B cell (primary cell): ENCODE measurements at regions of chr15 and their contacts with region 1.

Region 1: DNA sequence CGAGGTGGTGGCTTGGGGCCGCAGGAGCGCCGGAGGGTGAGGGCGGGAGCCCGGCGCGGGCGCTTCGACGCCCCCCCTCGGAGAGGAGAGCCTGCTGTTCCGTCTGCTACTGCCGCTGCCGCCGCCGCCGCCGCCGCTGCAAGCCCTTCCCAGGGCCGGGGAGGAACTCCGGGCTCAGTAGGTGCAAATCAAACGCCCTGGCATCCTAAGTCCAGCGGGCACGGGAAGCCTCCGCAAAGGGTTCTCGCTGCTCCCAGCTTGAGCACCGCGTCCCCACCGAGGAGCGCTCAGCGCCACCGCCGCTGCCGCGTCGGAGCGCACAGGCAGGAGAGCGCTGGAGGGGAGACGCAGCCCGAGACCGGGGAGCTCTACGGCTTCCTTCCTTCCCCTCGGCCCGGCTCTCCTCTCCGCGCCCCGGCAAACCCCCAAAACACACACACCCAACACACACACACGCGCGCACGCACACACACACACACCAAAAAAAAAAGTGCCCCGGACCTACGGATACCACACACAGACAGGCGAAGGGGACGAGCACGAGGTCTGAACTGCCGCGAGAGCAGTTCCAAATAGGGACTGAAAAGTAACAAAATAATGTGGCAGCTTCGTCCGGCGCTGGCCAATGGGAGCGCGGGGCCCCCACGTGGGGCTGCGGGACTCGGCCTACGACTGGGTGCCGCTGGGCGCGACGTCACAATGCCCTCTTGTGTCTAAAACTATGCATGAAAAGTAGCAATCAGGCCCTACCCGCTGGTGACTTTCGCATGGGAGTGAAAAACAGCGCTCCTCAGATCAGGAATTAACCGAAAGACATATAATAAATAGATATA is at the start of gene TLE3:
- DNase-seq: peak; percentile 99
- ATAC-seq: peak; percentile 53
- H3K4me3 ChIP-seq: peak within 1 kb of the TSS; percentile 82 to 97 (median 92)
- H3K4me3 Mint-ChIP-seq: peak within 1 kb of the TSS; percentile 98
- H3K27ac ChIP-seq: peak within 1 kb of the TSS; percentile 79 to 87
- H3K27ac Mint-ChIP-seq: peak within 1 kb of the TSS; percentile 97
- H3K4me1 ChIP-seq: peaks cover 57 to 68% of the 10 kb centered on the region in 2 donors
- H3K4me1 Mint-ChIP-seq: peaks cover 65% of the 10 kb centered on the region
- H3K27me3 ChIP-seq: peaks cover 0 to 20% (median 10%) of the 10 kb centered on the region in 4 experiments
- H3K27me3 Mint-ChIP-seq: peaks cover under 1% of the 10 kb centered on the region
- CTCF ChIP-seq: peak; percentile 56
- total RNA-seq, gene TLE3: 261 and 278 TPM in 2 replicates

Region 2: DNA sequence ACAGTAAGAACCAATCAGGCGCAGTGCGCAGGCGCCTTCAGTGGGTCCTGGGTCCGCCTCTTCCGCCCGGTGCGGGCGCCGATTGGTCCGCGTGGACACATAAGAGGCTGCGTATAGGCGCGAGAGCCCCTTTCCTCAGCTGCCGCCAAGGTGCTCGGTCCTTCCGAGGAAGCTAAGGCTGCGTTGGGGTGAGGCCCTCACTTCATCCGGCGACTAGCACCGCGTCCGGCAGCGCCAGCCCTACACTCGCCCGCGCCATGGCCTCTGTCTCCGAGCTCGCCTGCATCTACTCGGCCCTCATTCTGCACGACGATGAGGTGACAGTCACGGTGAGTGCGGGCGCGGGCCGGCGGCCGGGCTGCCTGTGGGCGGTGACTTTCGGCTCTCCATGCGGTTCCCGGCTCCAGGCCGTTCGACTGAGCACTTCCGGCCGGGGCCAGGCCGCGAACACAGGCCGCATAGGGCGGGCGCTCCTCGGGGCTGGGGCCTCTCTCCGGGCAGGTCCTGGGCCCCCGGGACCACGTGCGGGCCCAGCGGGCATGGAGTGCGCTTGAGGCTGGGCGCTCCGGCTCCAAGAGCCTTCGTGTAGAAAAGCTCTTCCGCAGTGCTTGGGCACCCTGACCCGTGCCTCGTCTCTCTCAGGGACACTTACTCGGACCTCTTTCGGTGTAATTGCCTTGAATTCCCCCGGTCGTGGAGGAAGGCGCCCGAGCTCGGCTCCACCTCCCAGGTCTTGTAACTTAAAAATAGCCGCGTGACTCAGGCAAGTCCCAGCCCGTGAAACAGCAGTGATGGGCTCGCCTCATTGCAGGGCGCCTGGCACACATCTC is 644.6 kb before region 1 on chr15 and contains the start of gene RPLP1:
- CTCF ChIA-PET with region 1: no interaction called
- POLR2A ChIA-PET with region 1: interaction called, 4 read pairs
- intact Hi-C with region 1: loop called (anchors 5 kb)
- DNase-seq: peak; percentile 97
- ATAC-seq: peak; percentile 91
- H3K4me3 ChIP-seq: peak within 1 kb of the TSS; percentile 77 to 97 (median 88)
- H3K4me3 Mint-ChIP-seq: peak within 1 kb of the TSS; percentile 100
- H3K27ac ChIP-seq: peak within 1 kb of the TSS; percentile 77 to 93
- H3K27ac Mint-ChIP-seq: peak within 1 kb of the TSS; percentile 100
- H3K4me1 ChIP-seq: peaks cover 26% of the 10 kb centered on the region in 2 donors
- H3K4me1 Mint-ChIP-seq: peaks cover 43% of the 10 kb centered on the region
- H3K27me3 ChIP-seq: no peaks in the 10 kb centered on the region
- H3K27me3 Mint-ChIP-seq: no peaks in the 10 kb centered on the region
- CTCF ChIP-seq: no peak
- total RNA-seq, gene RPLP1: 2,373 and 2,400 TPM in 2 replicates

Region 3: DNA sequence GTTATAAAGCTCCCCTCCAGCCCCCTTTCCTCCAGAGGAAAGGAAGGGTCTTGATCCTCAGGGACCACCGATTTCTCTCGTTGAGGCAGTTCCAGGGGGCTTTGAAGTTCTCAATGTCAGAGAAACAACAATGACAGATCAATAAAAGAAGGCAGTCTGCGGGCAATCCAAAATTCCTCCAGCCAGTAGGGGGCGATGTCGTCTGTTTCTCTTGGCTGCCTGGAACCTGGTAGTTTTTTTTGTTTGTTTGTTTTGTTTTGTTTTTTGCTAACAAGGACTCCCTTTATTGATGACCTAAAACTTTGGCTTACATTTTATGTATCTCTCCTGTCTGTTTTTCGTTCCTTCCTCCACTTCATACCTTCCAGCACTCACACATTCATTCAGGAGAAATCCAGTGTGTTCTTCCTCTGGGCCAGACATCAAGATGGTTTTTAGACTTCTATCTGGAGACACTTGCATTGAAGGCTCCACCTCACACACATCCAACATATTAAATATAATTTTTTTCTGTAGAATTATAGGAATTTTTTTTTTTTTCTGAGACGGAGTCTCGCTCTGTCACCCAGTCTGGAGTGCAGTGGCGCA is 368.3 kb before region 1 on chr15:
- CTCF ChIA-PET with region 1: interaction called, 9 read pairs
- POLR2A ChIA-PET with region 1: interaction called, 3 read pairs
- intact Hi-C with region 1: loop called (anchors 2 kb)
- DNase-seq: peak; percentile 76
- ATAC-seq: peak; percentile 57
- H3K4me3 ChIP-seq: no peak overlapping the region
- H3K4me3 Mint-ChIP-seq: no peak overlapping the region
- H3K27ac ChIP-seq: no peak overlapping the region
- H3K27ac Mint-ChIP-seq: peak overlapping the region; percentile 10
- H3K4me1 ChIP-seq: peaks cover 6 to 20% of the 10 kb centered on the region in 2 donors
- H3K4me1 Mint-ChIP-seq: peaks cover 26% of the 10 kb centered on the region
- H3K27me3 ChIP-seq: peaks cover 0 to 10% (median 1%) of the 10 kb centered on the region in 4 experiments
- H3K27me3 Mint-ChIP-seq: peaks cover 6% of the 10 kb centered on the region
- CTCF ChIP-seq: peak; percentile 92

Region 4: DNA sequence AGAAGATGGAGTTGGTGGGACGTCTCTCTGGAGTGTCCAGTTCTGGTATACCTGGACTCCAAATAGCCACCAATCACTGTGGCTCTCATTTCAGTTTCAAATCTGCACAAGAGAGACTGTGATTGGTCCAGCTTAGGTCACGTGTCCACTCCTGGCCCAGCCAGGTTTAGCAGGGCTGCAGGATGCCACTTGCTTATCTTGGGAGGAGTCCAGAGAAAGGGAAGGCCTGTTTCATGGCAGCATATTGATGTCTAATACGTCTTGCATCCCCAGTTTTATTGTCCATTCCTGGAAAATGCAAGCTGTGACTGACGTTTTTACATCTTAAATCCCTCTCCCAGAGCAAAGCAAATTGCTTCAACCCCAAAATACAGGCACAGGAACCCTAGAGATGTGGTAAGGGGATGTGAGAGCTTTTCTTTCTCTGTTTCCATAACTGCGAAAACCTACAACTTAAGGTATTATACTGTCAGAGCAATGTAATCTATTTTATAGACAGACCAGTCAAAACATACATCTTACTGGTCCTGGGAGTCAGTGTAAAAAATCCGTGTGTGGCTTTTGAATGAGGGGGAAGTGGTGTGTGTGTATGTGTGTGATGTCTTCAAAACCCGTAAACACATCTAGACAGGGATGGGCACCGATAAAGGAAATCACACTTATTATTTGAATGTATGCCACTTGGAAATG is 274.2 kb before region 1 on chr15:
- CTCF ChIA-PET with region 1: no interaction called
- POLR2A ChIA-PET with region 1: no interaction called
- intact Hi-C with region 1: no loop called
- DNase-seq: no peak
- ATAC-seq: no peak
- H3K4me3 ChIP-seq: no peak overlapping the region
- H3K4me3 Mint-ChIP-seq: no peak overlapping the region
- H3K27ac ChIP-seq: no peak overlapping the region
- H3K27ac Mint-ChIP-seq: no peak overlapping the region
- H3K4me1 ChIP-seq: no peaks in the 10 kb centered on the region
- H3K4me1 Mint-ChIP-seq: no peaks in the 10 kb centered on the region
- H3K27me3 ChIP-seq: peaks cover 0 to 16% (median 0%) of the 10 kb centered on the region in 4 experiments
- H3K27me3 Mint-ChIP-seq: peaks cover 21% of the 10 kb centered on the region
- CTCF ChIP-seq: no peak

Region 5: GRCh38 chr15:69976366-69976994 is 121.1 kb before region 1 on chr15:
- CTCF ChIA-PET with region 1: interaction called, 10 read pairs
- POLR2A ChIA-PET with region 1: interaction called, 22 read pairs
- intact Hi-C with region 1: no loop called
- DNase-seq: peak; percentile 75
- ATAC-seq: no peak
- H3K4me3 ChIP-seq: no peak overlapping the region
- H3K4me3 Mint-ChIP-seq: no peak overlapping the region
- H3K27ac ChIP-seq: no peak overlapping the region
- H3K27ac Mint-ChIP-seq: no peak overlapping the region
- H3K4me1 ChIP-seq: peaks cover 24 to 29% of the 10 kb centered on the region in 2 donors
- H3K4me1 Mint-ChIP-seq: peaks cover 30% of the 10 kb centered on the region
- H3K27me3 ChIP-seq: peaks cover 0 to 18% (median 3%) of the 10 kb centered on the region in 4 experiments
- H3K27me3 Mint-ChIP-seq: peaks cover 24% of the 10 kb centered on the region
- CTCF ChIP-seq: no peak

Region 6: DNA sequence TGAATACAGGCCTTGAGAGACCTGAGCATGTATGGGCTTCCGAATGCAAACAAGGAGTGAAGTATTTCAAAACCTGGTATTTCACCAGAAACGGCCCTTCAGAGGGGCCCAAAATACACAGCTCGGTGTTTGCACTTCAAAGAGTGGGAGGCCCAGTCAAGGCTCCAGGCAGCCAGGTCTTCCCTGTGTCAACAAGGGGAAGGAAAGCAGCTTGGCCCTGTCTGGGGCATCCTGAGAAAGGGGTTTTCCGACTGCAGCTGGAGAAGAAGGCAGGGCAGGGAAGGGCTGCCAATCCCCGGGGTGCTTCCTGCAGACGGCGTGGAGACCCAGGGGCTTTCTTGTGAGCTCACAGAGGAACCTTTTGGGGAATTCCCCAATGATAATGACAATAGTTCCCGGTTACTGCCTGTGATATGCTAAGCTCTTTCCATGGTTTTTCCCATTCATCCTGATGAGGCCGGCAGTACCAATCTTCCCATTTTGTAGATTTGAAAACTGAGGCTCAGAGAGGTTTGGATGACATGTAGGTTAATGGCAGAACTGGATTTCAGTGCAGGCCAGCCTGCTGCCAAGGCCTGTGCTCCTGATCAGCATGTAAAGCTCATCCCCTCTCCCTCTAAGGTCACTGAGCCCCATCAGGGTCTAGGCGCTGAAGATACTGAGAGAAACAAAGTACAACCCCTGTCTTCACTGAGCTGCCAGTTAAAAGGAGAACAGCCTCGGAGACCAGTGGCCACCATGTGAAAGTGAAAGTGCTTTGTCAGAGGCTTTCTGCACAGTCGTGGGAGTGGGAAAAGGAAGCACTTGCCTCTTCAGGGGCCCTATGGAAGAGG is 43.2 kb after region 1 on chr15:
- CTCF ChIA-PET with region 1: no interaction called
- POLR2A ChIA-PET with region 1: no interaction called
- intact Hi-C with region 1: loop called (anchors 5 kb)
- DNase-seq: peak; percentile 71
- ATAC-seq: peak; percentile 61
- H3K4me3 ChIP-seq: no peak overlapping the region
- H3K4me3 Mint-ChIP-seq: peak overlapping the region; percentile 64
- H3K27ac ChIP-seq: no peak overlapping the region
- H3K27ac Mint-ChIP-seq: peak overlapping the region; percentile 59
- H3K4me1 ChIP-seq: peaks cover 15 to 23% of the 10 kb centered on the region in 2 donors
- H3K4me1 Mint-ChIP-seq: peaks cover 27% of the 10 kb centered on the region
- H3K27me3 ChIP-seq: peaks cover 0 to 7% (median 0%) of the 10 kb centered on the region in 4 experiments
- H3K27me3 Mint-ChIP-seq: peaks cover 18% of the 10 kb centered on the region
- CTCF ChIP-seq: no peak

Region 7: GRCh38 chr15:70318594-70319465 is 221.3 kb after region 1 on chr15:
- CTCF ChIA-PET with region 1: interaction called, 10 read pairs
- POLR2A ChIA-PET with region 1: interaction called, 11 read pairs
- intact Hi-C with region 1: loop called (anchors 1 kb)
- DNase-seq: peak; percentile 40
- ATAC-seq: peak; percentile 37
- H3K4me3 ChIP-seq: peak overlapping the region in 3 of 5 experiments; percentile 24 to 34 (median 28)
- H3K4me3 Mint-ChIP-seq: peak overlapping the region; percentile 79
- H3K27ac ChIP-seq: peak overlapping the region; percentile 86 to 97
- H3K27ac Mint-ChIP-seq: peak overlapping the region; percentile 91
- H3K4me1 ChIP-seq: peaks cover 58 to 68% of the 10 kb centered on the region in 2 donors
- H3K4me1 Mint-ChIP-seq: peaks cover 61% of the 10 kb centered on the region
- H3K27me3 ChIP-seq: no peaks in the 10 kb centered on the region
- H3K27me3 Mint-ChIP-seq: no peaks in the 10 kb centered on the region
- CTCF ChIP-seq: no peak